ENCODE measurements at regions of chr2 and their contacts with region 1.

Region 1: GRCh38 chr2:45024600-45025291 is 15.5 kb upstream of the SIX2 start:
- DNase-seq: peak; percentile 99
- ATAC-seq: peak; percentile 88
- H3K4me3 ChIP-seq: no peak overlapping the region
- H3K27ac ChIP-seq: peak overlapping the region; percentile 62
- H3K4me1 ChIP-seq: peaks cover 13% of the 10 kb centered on the region
- H3K27me3 ChIP-seq: no peaks in the 10 kb centered on the region
- CTCF ChIP-seq: peak; percentile 92

Region 2: DNA sequence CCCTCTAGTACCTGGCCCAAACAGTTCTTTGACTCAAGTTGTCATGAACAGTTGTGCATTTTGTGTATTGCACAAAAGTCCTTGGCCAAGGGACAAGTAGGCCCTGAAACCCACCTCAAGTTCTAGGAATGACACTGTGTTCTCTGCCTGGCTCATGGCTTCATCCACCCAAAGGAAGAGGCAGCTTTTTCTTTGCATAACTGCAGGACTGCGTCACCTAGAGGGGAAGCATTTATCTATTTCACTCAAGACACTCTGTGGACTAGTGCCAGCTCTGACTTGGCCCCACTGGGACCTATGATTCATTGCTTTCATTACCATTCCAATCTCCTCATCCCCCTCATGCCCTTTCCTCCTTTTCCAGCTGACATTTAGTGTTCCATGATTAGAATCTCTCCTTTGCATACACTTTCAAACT is 103.8 kb after region 1 on chr2:
- CTCF ChIA-PET with region 1: no interaction called
- POLR2A ChIA-PET with region 1: interaction called, 15 read pairs
- intact Hi-C with region 1: loop called (anchors 1 kb)
- DNase-seq: peak; percentile 99
- ATAC-seq: peak; percentile 85
- H3K4me3 ChIP-seq: no peak overlapping the region
- H3K27ac ChIP-seq: peak overlapping the region; percentile 78
- H3K4me1 ChIP-seq: peaks cover 49% of the 10 kb centered on the region
- H3K27me3 ChIP-seq: no peaks in the 10 kb centered on the region
- CTCF ChIP-seq: peak; percentile 55

Region 3: GRCh38 chr2:45134014-45134413 is 109.3 kb after region 1 on chr2:
- CTCF ChIA-PET with region 1: no interaction called
- POLR2A ChIA-PET with region 1: interaction called, 15 read pairs
- intact Hi-C with region 1: no loop called
- DNase-seq: no peak
- ATAC-seq: no peak
- H3K4me3 ChIP-seq: no peak overlapping the region
- H3K27ac ChIP-seq: no peak overlapping the region
- H3K4me1 ChIP-seq: peaks cover 33% of the 10 kb centered on the region
- H3K27me3 ChIP-seq: no peaks in the 10 kb centered on the region
- CTCF ChIP-seq: no peak

Region 4: DNA sequence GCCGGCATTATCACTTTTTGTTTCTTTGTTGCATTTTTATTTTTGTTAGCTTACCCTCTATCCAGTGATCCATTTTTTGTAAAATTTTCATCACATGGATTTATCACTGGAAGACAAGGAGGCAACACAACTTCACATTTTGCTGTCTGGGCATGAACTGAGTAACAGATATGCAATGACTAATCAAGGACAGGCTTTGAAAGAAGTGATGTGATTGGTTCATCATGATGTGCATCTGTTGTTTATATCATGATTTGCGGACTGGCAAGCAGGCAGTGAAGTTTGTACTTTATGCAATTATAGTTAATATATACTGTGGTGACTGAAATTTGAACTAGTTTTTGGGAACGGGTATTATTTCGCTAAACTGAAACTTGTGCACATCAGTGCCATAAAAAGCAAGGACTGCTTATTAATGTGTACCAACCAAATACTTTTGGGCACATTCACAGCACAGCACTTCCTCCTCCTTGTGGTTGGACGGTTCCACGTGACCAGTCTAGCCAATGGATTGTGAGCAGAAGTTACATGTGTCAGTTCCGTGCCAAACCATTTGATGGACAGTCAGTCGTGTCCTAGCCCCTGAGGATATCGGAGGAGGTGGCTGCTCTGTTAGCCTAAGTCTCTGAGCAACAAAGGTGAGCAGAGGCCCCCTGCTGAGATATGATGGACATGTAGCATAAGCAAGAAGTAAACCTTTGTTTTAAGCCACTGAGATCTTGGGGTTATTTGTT is 185.9 kb after region 1 on chr2:
- CTCF ChIA-PET with region 1: no interaction called
- POLR2A ChIA-PET with region 1: no interaction called
- intact Hi-C with region 1: no loop called
- DNase-seq: peak; percentile 46
- ATAC-seq: no peak
- H3K4me3 ChIP-seq: no peak overlapping the region
- H3K27ac ChIP-seq: no peak overlapping the region
- H3K4me1 ChIP-seq: no peaks in the 10 kb centered on the region
- H3K27me3 ChIP-seq: no peaks in the 10 kb centered on the region
- CTCF ChIP-seq: 0 out of 2 replicates have a peak, but pooled peaks have one; percentile 9

Region 5: GRCh38 chr2:45329045-45329677 is 304.4 kb after region 1 on chr2:
- CTCF ChIA-PET with region 1: interaction called, 11 read pairs
- POLR2A ChIA-PET with region 1: no interaction called
- intact Hi-C with region 1: no loop called
- DNase-seq: peak; percentile 53
- ATAC-seq: peak; percentile 35; the same call in 1 of the 2 replicates
- H3K4me3 ChIP-seq: no peak overlapping the region
- H3K27ac ChIP-seq: peak overlapping the region; percentile 94
- H3K4me1 ChIP-seq: peaks cover 30% of the 10 kb centered on the region
- H3K27me3 ChIP-seq: no peaks in the 10 kb centered on the region
- CTCF ChIP-seq: peak; percentile 35; the same call in 1 of the 2 replicates

Region 6: GRCh38 chr2:45380131-45380836 is 355.5 kb after region 1 on chr2:
- CTCF ChIA-PET with region 1: no interaction called
- POLR2A ChIA-PET with region 1: no interaction called
- intact Hi-C with region 1: loop called (anchors 1 kb)
- DNase-seq: peak; percentile 98
- ATAC-seq: peak; percentile 98
- H3K4me3 ChIP-seq: no peak overlapping the region
- H3K27ac ChIP-seq: peak overlapping the region; percentile 98
- H3K4me1 ChIP-seq: peaks cover 40% of the 10 kb centered on the region
- H3K27me3 ChIP-seq: no peaks in the 10 kb centered on the region
- CTCF ChIP-seq: no peak

Region 7: DNA sequence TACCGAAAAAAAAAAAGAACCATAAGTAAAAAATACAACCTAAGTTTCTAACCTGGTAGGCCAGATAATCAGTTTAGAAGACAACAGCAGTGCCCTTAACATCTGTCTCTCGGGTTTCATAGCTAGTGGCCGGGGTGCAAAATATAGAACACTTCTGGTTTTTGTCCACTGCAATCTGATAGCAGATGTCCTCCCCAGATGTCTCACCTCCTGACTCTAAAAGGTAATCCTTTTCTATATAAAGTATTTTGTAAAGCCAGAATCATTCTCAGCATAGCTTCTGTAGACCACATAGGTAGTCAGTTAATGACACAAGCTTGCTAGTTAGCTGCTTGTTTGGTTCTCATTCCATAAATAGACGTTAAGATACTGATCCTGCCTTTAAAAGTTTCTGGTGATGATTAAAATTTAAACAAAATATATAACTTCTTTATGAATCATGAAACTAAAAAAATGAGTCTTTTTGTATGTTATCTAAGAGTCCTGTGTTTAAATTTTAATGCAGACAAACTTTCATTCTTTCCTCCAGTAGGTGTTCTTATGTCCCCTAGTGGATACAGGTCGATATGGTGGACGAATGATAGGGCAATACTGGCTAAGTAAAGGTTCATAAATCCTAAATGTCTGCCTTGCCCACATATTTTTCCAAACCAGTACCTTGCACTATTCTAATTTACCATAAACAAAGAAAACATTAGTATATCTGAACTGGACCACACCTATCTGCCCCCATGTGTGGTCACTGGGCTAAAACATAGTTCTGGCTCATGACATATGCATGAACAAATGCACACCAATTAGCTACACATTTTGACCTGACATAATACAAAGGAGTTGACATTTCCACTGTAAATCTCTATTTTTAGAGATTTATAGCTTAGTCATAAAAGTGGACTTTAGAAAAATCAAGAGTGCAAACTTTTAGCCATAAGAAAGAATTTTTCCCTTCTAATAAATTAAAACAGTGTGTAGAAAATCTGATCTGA is 415.3 kb after region 1 on chr2:
- CTCF ChIA-PET with region 1: interaction called, 12 read pairs
- POLR2A ChIA-PET with region 1: interaction called, 5 read pairs
- intact Hi-C with region 1: loop called (anchors 1 kb)
- DNase-seq: peak; percentile 59
- ATAC-seq: peak; percentile 76
- H3K4me3 ChIP-seq: no peak overlapping the region
- H3K27ac ChIP-seq: peak overlapping the region; percentile 71
- H3K4me1 ChIP-seq: peaks cover 21% of the 10 kb centered on the region
- H3K27me3 ChIP-seq: no peaks in the 10 kb centered on the region
- CTCF ChIP-seq: peak; percentile 80

Region 8: DNA sequence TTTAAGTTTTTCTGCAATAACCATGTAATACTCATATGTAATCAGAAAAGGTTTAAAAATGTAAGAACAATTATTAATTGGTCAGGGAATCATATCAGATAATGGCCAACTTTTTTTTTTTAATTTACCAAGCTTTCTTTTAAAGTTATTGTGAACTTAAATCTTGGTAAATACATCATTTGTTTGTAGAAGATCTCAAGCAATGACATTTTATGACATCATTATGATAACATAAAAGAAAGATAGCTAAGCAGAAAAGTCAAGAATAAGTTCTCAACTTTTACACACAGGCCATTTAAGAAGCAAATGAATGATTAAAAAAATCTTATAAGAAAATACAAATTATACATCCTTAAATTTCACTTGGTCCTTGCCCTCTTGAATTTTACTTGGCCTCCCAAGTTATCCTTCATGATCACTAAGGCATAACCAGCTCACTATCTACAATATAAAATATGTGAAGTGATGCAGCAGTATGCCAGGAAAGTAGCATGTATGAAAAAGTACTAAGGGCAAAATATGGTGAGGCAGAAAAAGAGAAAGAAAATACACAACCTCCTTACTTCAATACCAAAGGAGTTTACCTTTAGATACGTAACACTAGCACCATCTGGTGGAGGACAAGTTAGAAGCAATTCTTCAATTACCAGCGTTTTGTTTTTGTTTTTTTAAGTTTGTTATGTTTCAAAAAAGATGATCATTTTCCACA is 469.7 kb after region 1 on chr2:
- CTCF ChIA-PET with region 1: interaction called, 7 read pairs
- POLR2A ChIA-PET with region 1: no interaction called
- intact Hi-C with region 1: loop called (anchors 1 kb)
- DNase-seq: peak; percentile 83
- ATAC-seq: peak; percentile 40; the same call in 1 of the 2 replicates
- H3K4me3 ChIP-seq: no peak overlapping the region
- H3K27ac ChIP-seq: peak overlapping the region; percentile 38
- H3K4me1 ChIP-seq: peaks cover 5% of the 10 kb centered on the region
- H3K27me3 ChIP-seq: no peaks in the 10 kb centered on the region
- CTCF ChIP-seq: peak; percentile 89